MCF 10A (cell line): ENCODE measurements at regions of chr1 and their contacts with region 1.

Region 1: GRCh38 chr1:174743654-174744561 is 255.8 kb upstream of the CACYBP start:
- DNase-seq: peak; percentile 65
- H3K4me3 Mint-ChIP-seq: no peak overlapping the region
- H3K27ac Mint-ChIP-seq: no peak overlapping the region
- H3K4me1 Mint-ChIP-seq: no peaks in the 10 kb centered on the region
- H3K27me3 Mint-ChIP-seq: no peaks in the 10 kb centered on the region
- CTCF ChIP-seq: peak; percentile 76

Region 2: DNA sequence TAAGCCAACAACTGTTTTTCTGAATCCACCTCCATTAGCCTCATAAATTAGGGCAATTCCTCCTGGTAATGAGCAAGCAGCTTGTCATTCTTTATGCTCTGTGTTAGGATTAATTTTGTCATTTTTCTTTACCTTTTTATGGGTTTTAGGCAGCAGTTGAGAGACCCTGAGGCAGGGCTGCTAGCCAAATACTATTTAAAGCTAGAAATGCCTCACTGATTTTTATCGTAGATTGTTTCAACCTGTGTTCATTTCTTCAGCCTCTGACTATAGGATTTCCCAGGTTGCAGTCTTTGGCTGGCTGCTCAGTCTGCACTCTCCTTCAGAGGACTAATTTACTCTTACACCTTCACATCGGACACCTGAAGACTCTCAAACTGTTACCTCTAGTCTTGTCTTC is 646.5 kb before region 1 on chr1:
- CTCF ChIA-PET with region 1: no interaction called
- POLR2A ChIA-PET with region 1: no interaction called
- intact Hi-C with region 1: loop called (anchors 2 kb)
- DNase-seq: no peak
- H3K4me3 Mint-ChIP-seq: no peak overlapping the region
- H3K27ac Mint-ChIP-seq: no peak overlapping the region
- H3K4me1 Mint-ChIP-seq: no peaks in the 10 kb centered on the region
- H3K27me3 Mint-ChIP-seq: no peaks in the 10 kb centered on the region
- CTCF ChIP-seq: no peak

Region 3: DNA sequence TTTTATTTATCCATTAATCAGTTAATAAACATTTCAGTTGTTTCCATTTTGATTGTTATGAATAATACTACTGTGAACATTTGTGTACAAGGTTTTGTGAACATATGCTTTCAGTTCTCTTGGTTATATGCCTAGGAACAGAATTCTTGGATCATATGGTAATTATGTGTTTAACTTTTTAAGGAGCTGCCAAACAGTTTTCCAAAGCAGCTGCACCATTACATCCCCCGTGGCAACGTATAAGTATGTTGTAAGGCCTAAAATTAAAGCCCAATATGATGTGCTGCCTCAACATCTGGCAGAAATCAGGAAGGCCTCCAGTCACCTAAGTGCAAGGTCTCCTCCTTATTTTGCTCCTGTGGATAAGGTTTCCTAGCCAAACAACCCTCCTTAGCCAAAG is 20.3 kb after region 1 on chr1:
- CTCF ChIA-PET with region 1: interaction called, 19 read pairs
- POLR2A ChIA-PET with region 1: no interaction called
- intact Hi-C with region 1: no loop called
- DNase-seq: no peak
- H3K4me3 Mint-ChIP-seq: no peak overlapping the region
- H3K27ac Mint-ChIP-seq: no peak overlapping the region
- H3K4me1 Mint-ChIP-seq: no peaks in the 10 kb centered on the region
- H3K27me3 Mint-ChIP-seq: no peaks in the 10 kb centered on the region
- CTCF ChIP-seq: no peak